H1 (cell line): ENCODE measurements at regions of chr9 and their contacts with region 1.

Region 1: DNA sequence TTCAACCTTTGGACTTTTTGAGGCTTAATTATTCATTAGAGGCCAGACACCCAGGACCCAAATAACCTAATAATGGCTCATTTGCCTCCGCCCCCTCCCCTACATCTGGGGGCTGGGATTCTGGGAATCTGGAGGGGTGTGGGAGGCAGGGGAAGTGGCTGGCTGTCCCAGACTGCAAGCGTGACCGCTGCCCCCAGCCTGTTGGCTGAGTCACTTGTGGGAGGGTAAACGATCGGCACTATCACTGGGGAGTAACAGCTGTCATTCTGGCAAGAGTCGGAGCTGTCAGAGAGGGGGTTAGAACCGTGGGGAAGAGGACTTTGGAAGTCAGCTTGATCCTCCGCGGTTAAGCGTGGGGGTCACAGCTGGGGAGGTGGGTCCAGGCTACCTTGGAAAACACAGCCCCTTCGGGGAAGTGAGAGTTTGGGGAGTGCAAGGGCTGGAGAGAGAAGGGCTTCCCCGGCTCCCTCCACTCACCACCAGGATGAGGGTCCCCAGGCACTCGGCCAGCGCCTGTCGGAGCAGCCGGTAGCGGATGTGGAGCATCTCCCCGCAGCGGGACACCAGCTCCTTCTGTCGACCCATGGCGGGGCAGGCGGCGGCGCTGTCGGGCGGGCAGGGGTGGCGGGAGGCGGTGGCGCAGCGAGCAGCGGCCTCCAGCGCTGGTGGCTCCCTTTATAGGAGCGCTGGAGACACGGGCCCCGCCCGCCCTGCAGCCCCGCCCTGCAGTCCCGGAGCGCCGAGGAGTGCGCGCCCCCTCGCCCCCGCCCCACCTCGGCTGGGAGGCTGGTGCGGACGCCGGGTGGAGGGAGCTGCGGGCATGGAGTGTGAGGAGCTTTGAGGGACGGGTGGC is at the start of gene AQP3:
- DNase-seq: peak in 1 of 2 experiments; percentile 85
- H3K4me3 ChIP-seq: peak within 1 kb of the TSS; percentile 46 to 67 (median 57)
- H3K27ac ChIP-seq: no peak within 1 kb of the TSS
- H3K4me1 ChIP-seq: peaks cover 0 to 33% (median 16%) of the 10 kb centered on the region in 4 experiments; a peak in 6 of 7 replicates
- H3K27me3 ChIP-seq: peaks cover 0 to 23% (median 12%) of the 10 kb centered on the region in 4 experiments; a peak in 5 of 7 replicates
- CTCF ChIP-seq: peak; percentile 13 to 58 (median 46)
- EP300 ChIP-seq: no peak
- POLR2A ChIP-seq: no peak
- RAD21 ChIP-seq: peak; percentile 19 to 50; a peak in 2 of 4 replicates
- total RNA-seq, gene AQP3: 2.6 and 3.0 TPM in 2 replicates

Region 2: DNA sequence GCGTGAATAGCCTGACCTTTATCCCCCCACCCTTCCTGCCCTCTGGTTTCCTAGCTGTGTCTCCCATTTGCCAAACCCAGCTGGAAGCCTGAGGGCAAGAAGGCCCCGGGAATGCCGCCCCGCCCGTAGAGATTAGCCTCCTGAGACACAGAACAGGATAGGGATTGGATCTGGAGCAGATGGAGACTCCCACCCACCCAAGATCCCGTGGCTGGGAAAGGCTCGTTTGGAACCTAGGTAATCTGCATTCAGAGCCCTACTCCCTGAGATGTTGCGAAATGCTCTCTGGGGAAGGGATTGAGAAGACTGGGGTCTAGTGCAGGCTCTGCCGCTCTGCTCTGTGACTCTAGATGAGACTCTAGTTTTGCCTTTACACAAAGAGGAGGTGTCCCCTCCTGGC is 10.7 kb before region 1 on chr9:
- CTCF ChIA-PET with region 1: interaction called, 47 read pairs
- POLR2A ChIA-PET with region 1: interaction called, 5 read pairs
- DNase-seq: no peak
- H3K4me3 ChIP-seq: no peak overlapping the region
- H3K27ac ChIP-seq: no peak overlapping the region
- H3K4me1 ChIP-seq: peaks cover 0 to 5% (median 0%) of the 10 kb centered on the region in 4 experiments; a peak in 3 of 7 replicates
- H3K27me3 ChIP-seq: no peaks in the 10 kb centered on the region; a peak in 1 of 7 replicates
- CTCF ChIP-seq: no peak
- EP300 ChIP-seq: no peak
- POLR2A ChIP-seq: no peak
- RAD21 ChIP-seq: no peak

Region 3: DNA sequence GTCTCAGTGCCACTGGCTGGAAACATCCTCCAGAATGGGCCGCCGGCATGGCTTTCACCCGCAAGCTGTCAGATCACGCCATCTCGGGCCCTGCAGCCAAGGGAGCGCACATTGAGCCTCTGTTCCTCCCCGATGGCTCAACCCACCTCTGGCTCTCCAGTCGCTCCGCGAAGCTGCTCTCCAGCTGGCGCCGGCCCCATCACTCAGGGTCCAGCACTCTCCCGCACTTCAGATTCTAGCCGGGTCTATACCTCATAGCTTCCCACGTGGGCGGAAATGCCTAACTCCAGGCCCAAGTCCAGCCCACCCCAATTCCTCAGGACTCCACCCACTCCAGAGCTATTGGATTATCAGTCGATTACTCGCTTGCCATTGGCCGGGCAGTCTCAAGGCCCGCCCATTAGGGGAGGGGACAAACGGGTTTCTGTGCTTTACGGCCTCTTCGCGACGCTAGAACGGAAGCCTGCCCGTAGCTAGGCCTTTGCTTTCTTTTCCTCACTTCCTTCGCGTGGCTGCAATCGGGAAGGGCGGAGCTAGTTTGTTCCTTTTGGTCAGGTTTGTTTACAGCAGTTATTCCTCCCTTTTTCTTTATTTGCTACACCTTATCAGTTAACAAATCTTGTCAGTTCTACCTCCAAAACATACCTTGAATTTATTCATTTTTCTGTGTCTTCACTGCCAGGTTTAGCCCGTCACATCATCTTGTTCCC is 26.6 kb after region 1 on chr9 and contains the start of gene NOL6:
- CTCF ChIA-PET with region 1: interaction called, 358 read pairs
- POLR2A ChIA-PET with region 1: interaction called, 3 read pairs
- DNase-seq: peak; percentile 96 to 97
- H3K4me3 ChIP-seq: peak within 1 kb of the TSS; percentile 86 to 98 (median 94)
- H3K27ac ChIP-seq: no peak within 1 kb of the TSS
- H3K4me1 ChIP-seq: peaks cover 0 to 2% (median 0%) of the 10 kb centered on the region in 4 experiments; a peak in 1 of 7 replicates
- H3K27me3 ChIP-seq: no peaks in the 10 kb centered on the region
- CTCF ChIP-seq: no peak
- EP300 ChIP-seq: no peak
- POLR2A ChIP-seq: peak in 1 of 2 experiments; percentile 81; a peak in 1 of 3 replicates
- RAD21 ChIP-seq: no peak
- total RNA-seq, gene NOL6: 55.0 and 57.9 TPM in 2 replicates